Ascending aorta (tissue), 2 donors: ENCODE measurements at regions of chr10 and their contacts with region 1.

Region 1: DNA sequence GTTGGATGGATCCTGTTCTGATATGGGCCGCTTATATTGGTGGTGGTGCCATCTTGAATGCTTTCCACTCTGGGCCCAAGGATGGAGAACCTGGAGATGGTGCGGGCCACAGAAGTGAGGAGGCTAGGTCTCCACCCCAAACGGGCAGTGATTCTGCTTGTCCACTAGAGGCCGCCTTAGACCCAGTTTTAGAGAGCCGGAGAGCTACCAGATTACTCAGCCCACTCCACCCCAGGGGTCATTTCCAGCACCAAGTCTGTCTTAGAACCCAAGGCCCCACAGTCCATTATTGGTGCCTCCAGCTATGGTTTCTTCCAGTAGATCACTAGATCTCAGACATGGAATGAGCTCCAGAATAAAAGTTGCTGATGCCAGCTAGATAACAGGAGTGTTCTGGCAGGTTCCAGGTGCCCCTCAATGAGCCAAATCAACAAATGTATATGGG is 11.8 kb upstream of the CAMK2G start:
- DNase-seq: peak in 1 of 2 donors; percentile 87
- H3K4me3 ChIP-seq: no peak overlapping the region
- H3K27ac ChIP-seq: peak overlapping the region; percentile 86 to 91
- H3K4me1 ChIP-seq: peaks cover 19 to 38% of the 10 kb centered on the region in 2 donors
- H3K27me3 ChIP-seq: no peaks in the 10 kb centered on the region
- CTCF ChIP-seq: peak; percentile 75 to 94 (median 89)

Region 2: GRCh38 chr10:73717556-73717955 is 168.6 kb before region 1 on chr10:
- intact Hi-C with region 1: no loop called
- DNase-seq: no peak
- H3K4me3 ChIP-seq: no peak overlapping the region
- H3K27ac ChIP-seq: peak overlapping the region in 1 of 2 donors; percentile 26
- H3K4me1 ChIP-seq: no peaks in the 10 kb centered on the region
- H3K27me3 ChIP-seq: no peaks in the 10 kb centered on the region
- CTCF ChIP-seq: no peak

Region 3: GRCh38 chr10:73848821-73849489 is 37.2 kb before region 1 on chr10:
- intact Hi-C with region 1: no loop called
- DNase-seq: peak; percentile 58 to 94
- H3K4me3 ChIP-seq: no peak overlapping the region
- H3K27ac ChIP-seq: peak overlapping the region; percentile 94
- H3K4me1 ChIP-seq: peaks cover 18 to 35% of the 10 kb centered on the region in 2 donors
- H3K27me3 ChIP-seq: no peaks in the 10 kb centered on the region
- CTCF ChIP-seq: peak; percentile 98 to 100 (median 100)

Region 4: DNA sequence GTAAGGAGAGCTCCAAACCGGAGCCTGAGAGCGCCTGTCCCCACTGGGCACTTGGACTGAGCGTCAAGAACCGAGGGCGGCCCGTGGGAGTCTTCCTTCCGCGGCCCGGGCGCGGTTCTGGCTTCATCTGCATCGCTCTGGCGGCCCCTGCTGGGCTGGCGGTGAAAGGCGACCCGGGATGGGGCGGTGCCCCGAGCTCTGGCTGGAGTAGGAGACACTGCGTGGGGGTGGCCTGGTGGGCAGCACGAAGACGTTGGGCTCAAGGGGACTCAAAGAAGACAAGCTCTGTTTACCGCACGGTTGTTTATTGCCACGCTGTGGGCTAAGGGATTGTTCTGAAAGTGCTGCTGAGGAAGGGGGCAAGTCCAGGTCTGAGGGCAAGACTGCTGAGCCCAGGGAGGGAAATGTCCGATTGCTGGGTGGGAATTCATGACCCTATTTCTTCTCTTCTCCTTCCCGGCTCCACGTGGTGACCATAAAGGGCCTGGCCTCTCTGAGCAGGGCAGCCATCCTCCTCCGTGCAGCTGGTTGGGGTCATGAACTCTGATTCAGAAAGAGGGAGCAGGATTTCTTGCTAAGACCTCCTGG is 54.6 kb after region 1 on chr10:
- intact Hi-C with region 1: loop called (anchors 1 kb)
- DNase-seq: peak; percentile 38 to 94
- H3K4me3 ChIP-seq: no peak overlapping the region
- H3K27ac ChIP-seq: peak overlapping the region; percentile 62 to 69
- H3K4me1 ChIP-seq: peaks cover 0 to 6% of the 10 kb centered on the region in 2 donors
- H3K27me3 ChIP-seq: no peaks in the 10 kb centered on the region
- CTCF ChIP-seq: peak; percentile 96

Region 5: DNA sequence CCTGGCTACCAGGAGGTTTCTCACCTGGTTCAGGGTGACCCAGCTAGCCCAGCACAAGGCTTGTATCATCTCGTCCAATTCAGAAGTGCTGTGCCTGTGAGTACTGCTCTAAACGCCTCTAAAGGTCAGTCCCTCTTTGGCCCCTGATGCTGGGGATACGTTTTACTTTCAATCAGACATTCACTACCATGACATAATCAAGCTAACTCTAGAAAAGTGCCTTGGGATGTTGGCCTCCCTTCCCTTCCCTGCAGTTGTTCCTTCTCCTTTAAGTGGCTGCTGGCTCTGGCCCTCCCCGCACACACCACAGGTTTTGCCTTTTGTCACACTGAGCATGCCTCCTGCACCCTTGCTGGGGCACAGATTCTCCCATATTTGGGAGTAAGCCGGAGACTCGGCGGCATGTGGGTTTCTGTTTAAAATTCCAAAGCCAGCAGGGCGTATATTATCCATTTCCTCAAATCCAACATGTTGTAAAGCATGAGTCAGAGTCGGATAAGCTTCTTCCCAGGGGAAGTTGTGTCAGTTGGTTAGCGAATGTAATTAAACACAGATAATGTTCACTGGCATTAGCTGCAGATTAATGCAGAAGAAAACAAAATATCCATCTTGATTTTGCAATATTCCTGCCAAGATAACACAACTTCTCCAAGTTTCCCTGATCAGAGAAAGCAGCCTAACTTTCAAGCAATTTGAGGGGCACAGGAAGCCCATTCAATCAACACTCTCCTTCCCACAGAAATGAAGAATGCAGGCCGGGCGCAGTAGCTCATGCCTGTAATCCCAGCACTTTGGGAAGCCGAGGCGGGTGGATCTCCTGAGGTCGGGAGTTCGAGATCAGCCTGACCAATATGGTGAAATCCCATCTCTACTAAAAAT is 80.0 kb after region 1 on chr10:
- intact Hi-C with region 1: loop called (anchors 1 kb)
- DNase-seq: peak; percentile 76 to 95
- H3K4me3 ChIP-seq: peak overlapping the region in 1 of 2 donors; percentile 29
- H3K27ac ChIP-seq: peak overlapping the region; percentile 92 to 94
- H3K4me1 ChIP-seq: peaks cover 11 to 27% of the 10 kb centered on the region in 2 donors
- H3K27me3 ChIP-seq: no peaks in the 10 kb centered on the region
- CTCF ChIP-seq: no peak

Region 6: DNA sequence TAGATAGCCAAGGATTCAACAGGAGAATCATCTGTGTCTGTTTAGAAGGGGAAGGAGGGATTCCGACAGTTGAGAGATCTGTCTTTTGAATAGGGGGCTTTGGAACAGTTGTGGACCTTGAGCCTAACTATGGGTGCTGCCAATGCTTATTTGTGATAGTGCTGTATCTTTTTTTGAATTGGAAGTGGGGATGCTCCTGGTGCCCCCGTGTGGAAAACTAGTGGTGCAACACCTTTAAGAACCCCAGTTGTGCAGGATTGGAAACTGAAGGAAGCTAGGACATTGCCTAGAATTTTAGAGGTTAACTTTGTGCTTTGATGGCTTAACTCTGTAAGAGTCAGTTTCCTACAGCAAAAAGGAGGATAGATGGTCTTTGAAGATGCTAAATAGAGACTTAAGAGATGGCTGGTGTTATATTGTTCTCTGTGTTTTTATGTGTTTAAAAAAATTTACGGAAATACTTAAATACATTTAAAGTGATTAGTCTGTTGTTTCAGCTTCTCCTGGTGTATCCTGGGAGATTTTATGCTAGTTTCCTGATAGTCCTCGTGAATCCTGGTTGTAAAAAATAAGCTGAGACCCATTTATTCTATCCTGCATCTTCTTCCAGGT is 195.2 kb after region 1 on chr10:
- intact Hi-C with region 1: loop called (anchors 2 kb)
- DNase-seq: no peak
- H3K4me3 ChIP-seq: no peak overlapping the region
- H3K27ac ChIP-seq: no peak overlapping the region
- H3K4me1 ChIP-seq: peaks cover 6 to 38% of the 10 kb centered on the region in 2 donors
- H3K27me3 ChIP-seq: no peaks in the 10 kb centered on the region
- CTCF ChIP-seq: peak; percentile 59 to 70 (median 62)

Region 7: DNA sequence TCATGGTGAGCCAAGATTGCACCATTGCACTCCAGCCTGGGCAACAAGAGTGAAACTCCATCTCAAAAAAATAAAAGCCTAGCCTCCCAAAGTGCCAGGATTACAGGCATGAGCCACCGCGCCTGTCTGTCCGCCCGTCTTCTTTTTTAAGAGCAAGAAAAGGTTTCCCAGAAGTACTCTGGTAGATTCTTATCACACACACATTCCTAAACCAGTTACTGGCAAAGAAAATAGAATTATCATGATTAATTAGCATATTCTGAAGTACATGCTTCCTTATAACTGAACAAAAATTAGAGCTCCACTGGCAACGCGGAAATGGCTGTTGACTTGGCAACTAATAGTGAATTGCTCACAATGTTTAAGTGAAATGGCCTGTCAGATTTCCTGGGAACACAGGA is 351.9 kb after region 1 on chr10:
- intact Hi-C with region 1: loop called (anchors 5 kb)
- DNase-seq: no peak
- H3K4me3 ChIP-seq: peak overlapping the region in 1 of 2 donors; percentile 43
- H3K27ac ChIP-seq: peak overlapping the region; percentile 13 to 58
- H3K4me1 ChIP-seq: peaks cover 0 to 4% of the 10 kb centered on the region in 2 donors
- H3K27me3 ChIP-seq: no peaks in the 10 kb centered on the region
- CTCF ChIP-seq: no peak